Motor neuron (in vitro differentiated cells): ENCODE measurements at regions of chr11 and their contacts with region 1.

Region 1: DNA sequence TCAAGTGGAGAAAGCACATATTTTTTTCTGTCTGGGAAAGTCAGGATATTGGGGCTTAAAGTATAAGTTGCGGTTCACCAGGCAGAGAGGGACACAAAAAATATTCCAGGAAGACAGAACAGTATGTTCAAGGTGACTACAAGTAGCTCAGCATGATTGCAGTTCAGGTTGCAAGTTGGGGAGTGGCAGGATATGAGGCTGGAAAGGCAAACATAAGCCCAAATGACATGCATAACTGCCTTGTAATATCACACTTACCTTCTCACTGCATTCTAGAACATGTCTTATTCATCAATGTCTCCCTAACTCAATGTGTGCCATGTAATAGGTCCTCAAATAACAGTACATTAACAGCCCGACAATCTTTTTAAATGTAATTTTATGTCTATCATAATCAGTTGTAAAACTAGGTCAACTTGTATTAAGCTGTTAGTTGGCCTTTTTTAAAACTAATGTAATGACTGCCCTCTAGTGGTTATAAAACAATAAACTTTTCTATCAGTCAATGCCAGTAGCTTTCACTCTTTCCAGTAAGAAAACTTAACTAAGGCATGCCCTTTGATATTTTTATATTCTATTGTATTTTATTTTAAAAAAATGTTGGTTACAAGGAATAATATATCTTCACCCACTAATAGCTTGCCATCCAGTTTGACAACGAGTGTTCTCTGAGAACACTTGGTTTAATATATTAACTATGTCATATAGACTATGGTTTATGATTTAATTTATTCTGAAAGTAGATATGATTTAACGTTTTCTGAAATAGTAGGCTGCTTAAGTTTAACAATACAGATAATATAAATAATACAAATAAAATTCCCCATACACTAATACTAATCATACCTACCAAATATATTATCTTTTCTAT is 39.4 kb upstream of the CFAP300 start:
- ATAC-seq: peak in 6 of 8 experiments; percentile 36 to 61 (median 46)
- H3K4me3 ChIP-seq: no peak overlapping the region
- H3K27ac ChIP-seq: no peak overlapping the region
- H3K4me1 ChIP-seq: peaks cover 0 to 5% of the 10 kb centered on the region in 2 donors

Region 2: DNA sequence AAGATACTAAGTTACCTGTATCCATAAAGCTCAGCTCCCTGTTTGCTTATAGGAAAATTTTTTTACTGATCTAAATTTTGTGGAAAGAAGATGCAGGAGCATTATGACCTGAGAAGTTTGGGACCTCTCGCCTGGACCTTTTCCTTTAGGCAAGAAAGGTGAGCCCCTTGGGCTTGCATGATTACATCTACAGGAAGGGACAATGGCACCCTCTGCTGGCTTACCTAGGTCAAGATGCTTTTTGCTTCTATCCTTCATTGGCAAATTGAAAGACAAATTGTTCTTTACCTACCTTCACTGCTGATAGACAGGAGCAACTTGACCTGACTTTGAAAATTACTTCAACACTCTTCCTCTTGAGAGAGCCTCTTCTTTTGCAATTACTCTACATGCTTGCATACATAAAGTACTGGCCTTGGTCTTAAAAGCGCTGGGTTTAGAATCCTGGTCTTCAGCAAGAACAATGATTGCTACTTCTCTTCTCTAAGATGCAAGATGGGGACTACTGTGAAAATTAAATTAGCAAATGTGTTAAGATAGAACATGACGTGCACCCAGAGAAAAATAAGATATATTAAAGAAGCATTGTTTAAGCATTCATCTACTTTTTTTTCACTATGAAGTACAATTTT is 571.2 kb before region 1 on chr11:
- in situ Hi-C with region 1: loop called in 1 of 9 experiments (anchors 25 kb)
- ATAC-seq: peak in 3 of 8 experiments; percentile 31 to 44 (median 32)
- H3K4me3 ChIP-seq: no peak overlapping the region
- H3K27ac ChIP-seq: no peak overlapping the region
- H3K4me1 ChIP-seq: no peaks in the 10 kb centered on the region

Region 3: DNA sequence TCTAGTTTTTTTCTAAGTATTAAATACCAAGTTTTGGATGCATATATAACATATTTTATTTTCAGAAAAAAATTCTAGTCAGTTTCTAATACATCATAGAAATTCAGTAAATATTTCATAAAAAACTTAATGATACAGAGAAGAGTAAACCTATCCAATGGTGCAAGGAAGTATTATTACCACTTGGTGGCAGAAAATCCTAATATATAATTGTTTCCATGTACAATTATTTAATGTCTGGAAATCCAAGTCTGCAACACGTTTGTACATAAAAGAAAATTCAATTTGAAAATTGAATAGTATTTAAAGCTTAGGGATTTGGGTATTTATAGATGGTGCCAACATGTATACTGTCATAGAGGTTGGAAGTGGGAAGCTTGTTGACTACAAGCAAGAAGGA is 551.0 kb before region 1 on chr11:
- in situ Hi-C with region 1: loop called in 1 of 9 experiments (anchors 25 kb)
- ATAC-seq: peak in 3 of 8 experiments; percentile 45 to 72 (median 59)
- H3K4me3 ChIP-seq: no peak overlapping the region
- H3K27ac ChIP-seq: no peak overlapping the region
- H3K4me1 ChIP-seq: no peaks in the 10 kb centered on the region

Region 4: GRCh38 chr11:101860696-101861427 is 146.9 kb before region 1 on chr11:
- in situ Hi-C with region 1: loop called in 4 of 9 experiments (anchors 10 to 25 kb)
- ATAC-seq: peak in 5 of 8 experiments; percentile 27 to 92 (median 75)
- H3K4me3 ChIP-seq: no peak overlapping the region
- H3K27ac ChIP-seq: no peak overlapping the region
- H3K4me1 ChIP-seq: peaks cover 0 to 3% of the 10 kb centered on the region in 2 donors